ENCODE measurements at regions of chr3 and their contacts with region 1.

Region 1: GRCh38 chr3:154323891-154324738 is at the start of gene DHX36:
- DNase-seq: peak; percentile 98
- H3K4me3 ChIP-seq: peak within 1 kb of the TSS; percentile 57 to 90 (median 82)
- H3K27ac ChIP-seq: peak within 1 kb of the TSS; percentile 83 to 93 (median 90)
- H3K4me1 ChIP-seq: peaks cover 22 to 50% (median 48%) of the 10 kb centered on the region in 4 donors
- H3K27me3 ChIP-seq: no peaks in the 10 kb centered on the region
- CTCF ChIP-seq: peak in 1 of 3 experiments; percentile 3
- EP300 ChIP-seq: no peak
- POLR2A ChIP-seq: peak; percentile 55
- total RNA-seq, gene DHX36: 35.0 to 84.7 (median 54.5) TPM

Region 2: GRCh38 chr3:154120961-154121700 is 203.0 kb before region 1 on chr3 and contains the start of gene ARHGEF26:
- intact Hi-C with region 1: loop called (anchors 5 kb)
- DNase-seq: peak; percentile 94
- H3K4me3 ChIP-seq: peak within 1 kb of the TSS; percentile 73 to 97 (median 90)
- H3K27ac ChIP-seq: peak within 1 kb of the TSS; percentile 81 to 91 (median 86)
- H3K4me1 ChIP-seq: peaks cover 9 to 29% (median 21%) of the 10 kb centered on the region in 4 donors
- H3K27me3 ChIP-seq: no peaks in the 10 kb centered on the region
- CTCF ChIP-seq: no peak
- EP300 ChIP-seq: no peak
- POLR2A ChIP-seq: no peak
- total RNA-seq, gene ARHGEF26: 124 to 158 (median 132) TPM

Region 3: DNA sequence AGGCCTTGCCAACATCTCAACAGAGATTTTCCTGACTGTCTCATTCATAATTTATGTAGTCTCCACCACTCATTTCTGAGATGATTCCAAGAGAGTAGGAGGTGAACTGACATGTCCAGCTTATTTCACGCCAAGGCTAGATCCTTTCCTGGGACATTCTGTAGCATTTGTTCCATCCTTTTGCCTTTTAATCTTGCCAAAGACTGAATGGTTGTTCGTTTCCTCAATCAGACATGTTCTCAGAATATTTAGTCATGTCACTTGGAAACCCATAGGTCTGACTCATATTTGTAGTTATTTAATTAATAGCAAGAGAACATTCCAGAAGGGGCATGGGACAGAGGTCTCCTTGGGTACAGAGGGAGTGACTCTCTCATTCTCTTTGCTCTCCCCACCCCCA is 80.8 kb before region 1 on chr3:
- intact Hi-C with region 1: no loop called
- DNase-seq: no peak
- H3K4me3 ChIP-seq: no peak overlapping the region
- H3K27ac ChIP-seq: peak overlapping the region; percentile 60 to 73 (median 68)
- H3K4me1 ChIP-seq: peaks cover 5 to 52% (median 35%) of the 10 kb centered on the region in 4 donors
- H3K27me3 ChIP-seq: no peaks in the 10 kb centered on the region
- CTCF ChIP-seq: no peak
- EP300 ChIP-seq: no peak
- POLR2A ChIP-seq: no peak

Region 4: GRCh38 chr3:154451948-154452347 is 127.8 kb after region 1 on chr3:
- intact Hi-C with region 1: no loop called
- DNase-seq: no peak
- H3K4me3 ChIP-seq: no peak overlapping the region
- H3K27ac ChIP-seq: no peak overlapping the region
- H3K4me1 ChIP-seq: no peaks in the 10 kb centered on the region
- H3K27me3 ChIP-seq: no peaks in the 10 kb centered on the region
- CTCF ChIP-seq: no peak
- EP300 ChIP-seq: no peak
- POLR2A ChIP-seq: no peak

Region 5: DNA sequence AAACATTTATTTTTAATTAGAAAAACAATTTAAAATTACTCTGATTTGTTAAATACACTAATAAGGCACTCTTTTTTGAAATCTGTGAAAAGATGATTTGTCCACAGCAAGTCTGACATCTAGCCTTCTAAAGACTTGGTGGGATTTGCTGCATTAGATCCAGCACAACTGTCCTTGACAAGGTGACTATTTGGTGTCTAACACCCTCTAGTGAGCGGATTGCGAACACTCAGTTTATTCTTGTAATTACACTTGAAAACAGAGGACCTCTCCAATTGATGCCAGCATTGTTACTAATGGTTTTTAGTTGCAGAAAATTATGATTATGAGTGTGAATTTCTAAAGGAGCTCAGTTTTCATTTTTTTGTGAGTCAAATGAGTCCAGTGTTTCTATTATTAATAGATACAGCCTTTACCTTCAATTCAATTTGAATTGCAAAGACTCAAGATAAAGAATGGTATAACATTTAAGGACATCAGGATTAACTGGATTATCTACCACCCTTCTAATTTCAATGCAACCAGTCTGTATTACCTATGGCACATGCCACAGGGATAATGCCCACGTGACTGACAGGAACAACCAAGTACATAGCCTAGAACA is 999.0 kb after region 1 on chr3:
- intact Hi-C with region 1: loop called (anchors 10 kb)
- DNase-seq: no peak
- H3K4me3 ChIP-seq: no peak overlapping the region
- H3K27ac ChIP-seq: no peak overlapping the region
- H3K4me1 ChIP-seq: no peaks in the 10 kb centered on the region
- H3K27me3 ChIP-seq: no peaks in the 10 kb centered on the region
- CTCF ChIP-seq: peak; percentile 62 to 71 (median 63)
- EP300 ChIP-seq: no peak
- POLR2A ChIP-seq: no peak